IMR-90 (cell line): ENCODE measurements at regions of chr1 and their contacts with region 1.

Region 1: DNA sequence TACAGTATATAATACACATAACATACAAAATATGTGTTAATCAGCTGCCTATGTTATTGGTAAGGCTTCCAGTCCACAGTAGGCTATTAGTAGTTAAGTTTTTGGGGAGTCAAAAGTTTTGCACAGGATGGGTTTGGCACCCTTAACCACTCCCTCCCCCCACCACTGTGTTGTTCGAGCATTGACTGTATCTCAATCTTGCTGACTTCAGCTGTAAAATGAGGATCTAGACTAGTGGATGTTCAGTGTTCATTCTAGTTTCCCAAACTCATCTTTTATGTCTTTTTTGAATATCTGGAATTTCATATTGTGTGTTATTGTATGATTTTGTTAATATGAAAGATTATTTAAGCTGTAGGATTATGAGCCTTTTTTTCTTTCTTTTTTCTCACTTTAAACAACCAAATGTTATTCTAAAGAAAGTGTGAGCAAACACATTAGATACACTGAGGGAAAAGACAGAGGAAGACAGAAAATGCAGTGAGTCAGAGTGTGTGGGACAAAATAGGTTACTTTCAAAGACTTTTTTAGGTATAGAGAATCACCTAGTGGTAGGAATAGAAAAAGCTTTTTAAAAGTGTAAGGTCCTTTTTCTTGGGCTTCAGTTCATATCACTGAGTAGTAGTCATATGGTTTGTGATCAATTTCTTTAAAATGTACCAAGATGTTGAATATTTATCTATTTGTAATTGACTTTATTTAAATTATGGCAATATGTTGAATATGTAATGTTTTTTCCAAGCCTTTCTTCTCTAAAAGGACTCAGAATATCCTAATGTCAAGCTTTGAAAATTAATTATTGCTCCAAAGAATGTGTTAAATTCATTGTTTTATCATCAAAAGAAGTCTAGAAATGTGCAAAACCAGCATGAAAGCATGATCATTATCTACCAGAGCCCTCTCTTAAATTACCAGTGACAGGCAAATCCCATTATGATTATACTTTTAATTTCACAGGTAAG is 17.9 kb upstream of the CENPF start:
- DNase-seq: peak; percentile 73
- ATAC-seq: peak; percentile 85
- H3K4me3 ChIP-seq: no peak overlapping the region
- H3K27ac ChIP-seq: no peak overlapping the region
- H3K4me1 ChIP-seq: peaks cover 2% of the 10 kb centered on the region; the same call in 1 of the 2 replicates
- H3K27me3 ChIP-seq: peaks cover 1% of the 10 kb centered on the region
- CTCF ChIP-seq: peak; percentile 93
- POLR2A ChIP-seq: no peak
- RAD21 ChIP-seq: peak; percentile 88

Region 2: DNA sequence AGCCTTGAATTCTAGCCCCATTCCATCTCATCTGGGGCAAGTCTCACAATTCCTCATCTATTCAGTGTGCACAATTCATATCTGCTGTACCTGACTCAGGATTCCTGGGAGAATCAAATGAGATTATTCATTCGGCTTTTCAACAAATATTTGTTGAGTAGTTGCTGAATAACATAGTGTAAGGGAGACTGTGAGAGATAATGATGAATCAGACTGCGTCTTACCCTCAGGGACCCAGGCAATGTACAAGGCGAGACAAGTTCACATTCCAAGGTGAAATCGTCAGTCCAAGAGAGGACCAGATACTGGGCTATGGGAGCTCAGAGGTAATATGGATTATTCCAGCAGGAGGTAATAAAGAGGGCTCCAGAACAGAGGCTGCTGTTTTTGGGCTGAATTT is 371.9 kb before region 1 on chr1:
- CTCF ChIA-PET with region 1: interaction called, 5 read pairs
- POLR2A ChIA-PET with region 1: no interaction called
- dilution Hi-C with region 1: no loop called
- in situ Hi-C with region 1: loop called (anchors 10 kb)
- intact Hi-C with region 1: loop called (anchors 5 kb)
- DNase-seq: peak; percentile 18
- ATAC-seq: peak; percentile 48
- H3K4me3 ChIP-seq: no peak overlapping the region
- H3K27ac ChIP-seq: no peak overlapping the region
- H3K4me1 ChIP-seq: no peaks in the 10 kb centered on the region; the same call in 1 of the 2 replicates
- H3K27me3 ChIP-seq: peaks cover 38% of the 10 kb centered on the region
- CTCF ChIP-seq: no peak
- POLR2A ChIP-seq: no peak
- RAD21 ChIP-seq: no peak

Region 3: DNA sequence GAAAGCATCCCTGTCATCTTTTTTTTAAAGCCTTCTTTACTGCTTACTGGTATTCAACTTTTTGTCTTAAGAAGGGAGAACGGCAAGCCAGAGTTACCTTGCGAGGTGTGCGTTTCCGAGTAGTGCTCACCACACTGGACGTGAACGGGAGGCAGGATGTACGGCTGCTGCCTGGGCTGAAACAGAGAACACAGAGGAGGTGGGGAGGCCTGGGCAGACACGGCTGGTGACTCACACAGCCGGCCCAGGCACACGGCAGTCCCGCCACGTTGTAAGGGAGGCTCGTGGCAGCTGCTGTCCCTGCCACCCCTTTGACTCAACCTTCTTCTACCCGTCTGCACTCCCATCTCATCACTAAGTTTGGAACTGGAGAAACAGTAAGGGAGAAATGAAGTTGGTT is 198.3 kb before region 1 on chr1:
- CTCF ChIA-PET with region 1: interaction called, 3 read pairs
- POLR2A ChIA-PET with region 1: no interaction called
- dilution Hi-C with region 1: no loop called
- in situ Hi-C with region 1: loop called (anchors 5 kb)
- intact Hi-C with region 1: loop called (anchors 5 kb)
- DNase-seq: peak; percentile 42
- ATAC-seq: peak; percentile 51; the same call in 1 of the 2 replicates
- H3K4me3 ChIP-seq: no peak overlapping the region
- H3K27ac ChIP-seq: no peak overlapping the region
- H3K4me1 ChIP-seq: no peaks in the 10 kb centered on the region
- H3K27me3 ChIP-seq: no peaks in the 10 kb centered on the region
- CTCF ChIP-seq: no peak
- POLR2A ChIP-seq: no peak
- RAD21 ChIP-seq: no peak

Region 4: DNA sequence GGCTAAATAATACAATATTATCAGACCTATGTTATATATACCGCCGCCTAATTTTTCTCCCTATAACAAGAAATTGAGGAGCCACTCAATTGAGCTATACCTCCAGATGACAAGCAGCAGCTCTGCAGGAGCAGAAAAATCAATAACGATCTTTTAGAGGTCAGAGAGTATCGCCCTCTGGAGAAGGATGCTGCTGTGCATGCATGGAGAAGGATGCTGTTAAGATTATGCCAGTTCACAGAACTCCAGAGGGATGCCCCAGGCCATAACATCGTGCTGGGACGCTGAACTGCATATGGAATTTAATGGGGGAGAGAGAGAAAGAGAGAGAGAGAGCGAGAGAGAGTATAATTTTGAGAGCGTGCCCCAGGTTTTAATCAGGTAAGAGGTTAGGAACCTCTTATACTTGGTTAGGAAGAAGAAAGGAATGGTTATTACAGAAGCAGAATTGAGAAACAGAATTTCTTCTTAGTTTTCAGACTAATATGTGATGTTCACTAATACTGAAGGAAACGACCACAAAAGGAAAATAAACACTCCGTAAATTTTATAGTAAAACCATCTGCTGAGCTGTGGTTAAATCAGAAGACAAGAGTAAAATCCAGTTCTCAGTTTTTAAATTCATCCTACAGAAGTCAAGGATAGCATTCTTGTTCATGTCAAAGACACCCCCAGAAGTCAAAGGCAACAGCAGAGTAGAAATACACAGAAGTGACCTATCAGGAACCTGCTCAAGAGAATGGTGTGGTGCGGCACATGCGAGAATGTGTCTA is 193.0 kb before region 1 on chr1:
- CTCF ChIA-PET with region 1: interaction called, 3 read pairs
- POLR2A ChIA-PET with region 1: no interaction called
- dilution Hi-C with region 1: no loop called
- in situ Hi-C with region 1: loop called (anchors 5 kb)
- intact Hi-C with region 1: loop called (anchors 5 kb)
- DNase-seq: peak; percentile 84
- ATAC-seq: peak; percentile 28
- H3K4me3 ChIP-seq: no peak overlapping the region
- H3K27ac ChIP-seq: peak overlapping the region; percentile 39; the same call in 1 of the 2 replicates
- H3K4me1 ChIP-seq: peaks cover 22% of the 10 kb centered on the region
- H3K27me3 ChIP-seq: no peaks in the 10 kb centered on the region
- CTCF ChIP-seq: no peak
- POLR2A ChIP-seq: no peak
- RAD21 ChIP-seq: no peak

Region 5: DNA sequence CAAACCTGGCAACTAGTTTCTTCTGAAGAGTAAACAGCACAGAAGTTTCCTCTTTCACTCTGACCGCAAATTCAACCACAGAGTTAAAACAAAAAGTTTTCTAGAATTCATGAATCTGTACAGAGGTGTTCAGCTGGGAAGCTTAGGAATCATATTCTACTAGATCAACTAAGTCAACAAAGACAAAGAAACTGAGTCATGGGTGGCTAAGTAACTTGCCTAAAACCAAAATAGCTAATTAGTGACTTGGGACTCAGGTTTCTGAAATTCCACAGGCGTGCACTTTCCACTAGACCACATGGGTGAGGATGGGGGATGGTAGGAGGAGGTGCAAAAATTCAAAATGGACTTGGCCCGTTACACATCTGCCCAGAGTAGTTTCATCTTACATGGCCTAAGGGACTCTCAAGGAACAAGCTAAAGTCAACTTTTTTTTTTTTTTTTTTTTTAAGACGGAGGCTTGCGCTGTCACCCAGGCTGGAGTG is 59.5 kb before region 1 on chr1:
- CTCF ChIA-PET with region 1: no interaction called
- POLR2A ChIA-PET with region 1: no interaction called
- dilution Hi-C with region 1: no loop called
- in situ Hi-C with region 1: no loop called
- intact Hi-C with region 1: no loop called
- DNase-seq: peak; percentile 64
- ATAC-seq: peak; percentile 33
- H3K4me3 ChIP-seq: no peak overlapping the region
- H3K27ac ChIP-seq: no peak overlapping the region
- H3K4me1 ChIP-seq: peaks cover 17% of the 10 kb centered on the region
- H3K27me3 ChIP-seq: no peaks in the 10 kb centered on the region
- CTCF ChIP-seq: no peak
- POLR2A ChIP-seq: no peak
- RAD21 ChIP-seq: no peak

Region 6: GRCh38 chr1:214678378-214678777 is 93.3 kb after region 1 on chr1:
- CTCF ChIA-PET with region 1: no interaction called
- POLR2A ChIA-PET with region 1: no interaction called
- dilution Hi-C with region 1: no loop called
- in situ Hi-C with region 1: no loop called
- intact Hi-C with region 1: no loop called
- DNase-seq: peak; percentile 37
- ATAC-seq: peak; percentile 61
- H3K4me3 ChIP-seq: no peak overlapping the region
- H3K27ac ChIP-seq: no peak overlapping the region
- H3K4me1 ChIP-seq: no peaks in the 10 kb centered on the region
- H3K27me3 ChIP-seq: no peaks in the 10 kb centered on the region
- CTCF ChIP-seq: no peak
- POLR2A ChIP-seq: no peak
- RAD21 ChIP-seq: no peak